Upper lobe of right lung (tissue), 1 donor: ENCODE measurements at regions of chr7 and their contacts with region 1.

Region 1: GRCh38 chr7:88243345-88243909 is 23.6 kb upstream of the SRI start:
- DNase-seq: no peak
- ATAC-seq: peak; percentile 98
- H3K4me3 ChIP-seq: no peak overlapping the region
- H3K27ac ChIP-seq: no peak overlapping the region
- H3K4me1 ChIP-seq: no peaks in the 10 kb centered on the region
- H3K27me3 ChIP-seq: no peaks in the 10 kb centered on the region
- CTCF ChIP-seq: peak; percentile 79

Region 2: DNA sequence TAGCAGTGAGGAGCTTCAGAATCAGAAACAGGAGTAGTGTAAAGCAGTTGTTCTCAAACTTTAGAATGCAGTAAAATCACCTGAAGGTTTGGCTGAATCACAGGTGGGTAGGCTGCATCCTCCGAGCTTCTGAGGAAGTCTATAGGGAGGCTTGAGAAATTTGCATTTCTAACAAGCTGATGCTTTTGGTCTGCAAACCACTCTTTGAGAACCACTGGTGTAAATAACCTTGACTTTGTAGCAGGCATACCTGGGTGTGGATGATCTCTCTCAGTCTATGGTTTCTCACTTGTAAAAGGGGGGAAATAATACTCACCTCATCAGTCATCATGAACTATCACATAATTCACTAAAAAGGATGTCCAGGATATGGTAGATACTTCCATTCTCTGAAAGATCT is 141.7 kb before region 1 on chr7:
- intact Hi-C with region 1: no loop called
- DNase-seq: no peak
- ATAC-seq: no peak
- H3K4me3 ChIP-seq: no peak overlapping the region
- H3K27ac ChIP-seq: no peak overlapping the region
- H3K4me1 ChIP-seq: no peaks in the 10 kb centered on the region
- H3K27me3 ChIP-seq: no peaks in the 10 kb centered on the region
- CTCF ChIP-seq: no peak

Region 3: DNA sequence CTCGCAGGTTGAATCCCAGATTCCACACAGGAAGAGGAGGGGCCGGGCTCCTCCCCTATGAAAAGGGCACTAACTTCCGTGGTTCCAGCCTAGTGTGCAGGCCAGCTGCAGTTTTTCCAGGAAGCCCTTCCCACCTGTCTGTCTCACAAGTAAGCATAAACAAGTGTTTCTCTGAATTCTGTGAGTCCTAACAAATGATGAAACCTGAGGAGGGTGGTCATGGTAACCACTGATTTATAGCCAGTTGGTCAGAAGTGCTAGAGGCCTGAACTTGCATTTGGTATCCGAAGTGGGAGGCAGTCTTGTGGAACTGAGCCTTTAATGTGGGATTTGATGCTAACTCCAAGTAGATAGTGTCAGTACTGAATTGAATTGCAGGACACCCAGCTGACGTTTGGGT is 117.9 kb after region 1 on chr7:
- intact Hi-C with region 1: loop called (anchors 10 kb)
- DNase-seq: no peak
- ATAC-seq: no peak
- H3K4me3 ChIP-seq: no peak overlapping the region
- H3K27ac ChIP-seq: no peak overlapping the region
- H3K4me1 ChIP-seq: no peaks in the 10 kb centered on the region
- H3K27me3 ChIP-seq: no peaks in the 10 kb centered on the region
- CTCF ChIP-seq: no peak

Region 4: DNA sequence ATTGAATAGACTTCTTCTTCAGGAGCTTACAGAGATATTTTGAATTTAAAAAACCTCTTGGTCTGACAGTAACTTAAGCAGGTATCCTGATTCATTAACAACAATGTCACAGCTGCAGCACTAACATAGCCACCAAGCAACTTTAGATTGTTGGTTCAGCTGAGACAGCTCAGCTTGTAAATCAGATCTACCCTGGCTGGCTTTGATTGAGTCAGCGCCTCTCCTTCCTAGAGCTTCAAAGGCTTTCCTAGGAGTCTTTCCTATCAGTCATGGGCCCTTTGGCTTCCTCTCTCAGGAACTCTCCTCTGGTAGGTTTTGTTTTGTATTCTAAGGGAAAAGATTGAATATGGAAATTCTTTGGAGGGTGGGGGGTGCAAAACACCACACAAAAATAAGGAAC is 134.0 kb after region 1 on chr7:
- intact Hi-C with region 1: no loop called
- DNase-seq: no peak
- ATAC-seq: no peak
- H3K4me3 ChIP-seq: no peak overlapping the region
- H3K27ac ChIP-seq: no peak overlapping the region
- H3K4me1 ChIP-seq: no peaks in the 10 kb centered on the region
- H3K27me3 ChIP-seq: no peaks in the 10 kb centered on the region
- CTCF ChIP-seq: no peak